PC-3 (cell line): ENCODE measurements at regions of chr7 and their contacts with region 1.

Region 1: DNA sequence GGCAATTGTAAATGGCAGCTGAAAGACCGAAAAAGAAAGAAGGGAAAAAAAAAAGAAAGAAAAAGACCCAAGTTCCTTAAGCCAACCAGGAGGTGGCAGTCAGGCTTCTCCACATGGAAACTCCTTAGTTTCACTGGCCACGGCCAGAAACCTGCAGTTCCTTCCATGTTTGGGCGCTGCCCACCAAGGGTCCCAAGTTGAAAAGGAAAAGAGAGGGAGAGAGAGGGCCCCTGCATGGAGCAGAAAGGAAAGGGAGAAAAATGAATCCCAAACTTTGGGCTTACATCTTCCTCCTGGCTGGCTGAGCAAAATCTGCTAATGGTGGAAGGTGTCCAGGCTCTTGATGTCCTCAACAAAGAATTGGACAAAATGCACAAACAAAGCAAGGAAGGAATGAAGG is 31.8 kb upstream of the ABCA13 start:
- DNase-seq: peak; percentile 56
- ATAC-seq: peak; percentile 49
- H3K4me3 ChIP-seq: no peak overlapping the region
- H3K27ac ChIP-seq: peak overlapping the region; percentile 35
- H3K4me1 ChIP-seq: peaks cover 12% of the 10 kb centered on the region
- H3K27me3 ChIP-seq: no peaks in the 10 kb centered on the region
- CTCF ChIP-seq: peak; percentile 66

Region 2: DNA sequence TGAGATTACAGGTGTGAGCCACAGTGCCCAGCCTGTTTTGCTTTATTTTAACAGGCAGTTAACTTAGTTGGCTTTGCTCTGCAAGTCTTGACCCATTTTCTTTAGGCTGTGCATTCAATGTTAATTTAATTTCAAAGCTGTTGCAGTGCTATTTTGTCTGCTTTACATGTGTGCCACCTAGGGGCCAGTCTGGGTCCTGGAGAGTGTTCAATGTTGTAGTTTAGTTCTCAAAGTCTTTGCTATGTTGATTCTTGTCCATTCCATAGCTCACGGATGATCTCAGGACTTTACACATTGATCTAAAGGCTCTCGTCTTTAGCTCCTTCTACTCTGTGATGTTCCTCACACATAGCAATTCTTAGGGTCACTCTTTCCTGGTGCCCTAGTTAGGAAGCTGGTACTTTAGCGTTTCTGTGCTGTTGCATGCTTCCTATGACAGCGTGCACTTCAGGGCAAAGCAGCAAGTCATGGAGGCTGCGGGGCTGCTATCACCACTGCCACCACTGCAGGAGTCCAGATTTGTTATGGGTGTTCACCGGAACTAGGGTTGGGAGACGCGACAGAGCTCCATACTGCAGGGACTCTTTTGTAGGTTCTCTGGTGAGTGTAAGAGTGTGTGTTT is 15.4 kb after region 1 on chr7:
- CTCF ChIA-PET with region 1: interaction called, 7 read pairs
- POLR2A ChIA-PET with region 1: no interaction called
- intact Hi-C with region 1: loop called (anchors 1 kb)
- DNase-seq: peak; percentile 62
- ATAC-seq: peak; percentile 94
- H3K4me3 ChIP-seq: no peak overlapping the region
- H3K27ac ChIP-seq: no peak overlapping the region
- H3K4me1 ChIP-seq: 0 out of 2 replicates have a peak, but pooled peaks cover 9% of the 10 kb centered on the region
- H3K27me3 ChIP-seq: no peaks in the 10 kb centered on the region
- CTCF ChIP-seq: peak; percentile 83